Mammary epithelial cell (primary cell): ENCODE measurements at regions of chr2 and their contacts with region 1.

Region 1: GRCh38 chr2:27409321-27410073 is at the start of gene PPM1G:
- DNase-seq: peak; percentile 94
- H3K4me3 ChIP-seq: peak within 1 kb of the TSS; percentile 93 to 100 (median 96)
- H3K27ac ChIP-seq: peak within 1 kb of the TSS; percentile 82
- H3K4me1 ChIP-seq: peaks cover 11% of the 10 kb centered on the region
- H3K27me3 ChIP-seq: no peaks in the 10 kb centered on the region
- CTCF ChIP-seq: no peak
- total RNA-seq, gene PPM1G: 58.8 to 113 TPM

Region 2: GRCh38 chr2:27370026-27370815 is 39.3 kb before region 1 on chr2 and contains the starts of genes EIF2B4 and SNX17:
- CTCF ChIA-PET with region 1: no interaction called
- dilution Hi-C with region 1: no loop called
- in situ Hi-C with region 1: no loop called
- intact Hi-C with region 1: loop called (anchors 1 kb)
- DNase-seq: peak; percentile 99
- H3K4me3 ChIP-seq: peak within 1 kb of the TSS; percentile 88 to 96 (median 94)
- H3K27ac ChIP-seq: peak within 1 kb of the TSS; percentile 67
- H3K4me1 ChIP-seq: peaks cover 18% of the 10 kb centered on the region
- H3K27me3 ChIP-seq: no peaks in the 10 kb centered on the region
- CTCF ChIP-seq: peak; percentile 55 to 97
- total RNA-seq, gene EIF2B4: 19.8 to 42.3 TPM
- total RNA-seq, gene SNX17: 86.0 to 87.5 TPM

Region 3: DNA sequence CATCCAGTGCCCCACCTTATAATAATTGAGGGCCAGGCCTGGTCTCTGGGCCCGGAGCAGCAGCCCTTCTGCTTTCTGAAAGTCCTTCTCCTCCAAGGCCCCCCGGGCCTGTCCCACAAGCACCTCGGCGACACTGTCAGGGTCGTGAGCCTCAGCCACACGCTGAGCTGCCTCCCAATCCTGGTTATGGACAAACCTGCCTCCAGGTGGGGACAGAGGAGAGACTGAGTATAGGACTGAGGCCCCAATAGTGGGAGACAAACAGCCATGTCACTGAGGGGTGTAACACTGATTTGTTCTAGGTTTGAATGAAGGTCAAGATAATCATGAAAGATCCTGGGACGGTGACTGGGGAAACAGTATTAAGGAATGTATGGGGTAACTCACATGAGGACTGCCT is 44.5 kb after region 1 on chr2:
- CTCF ChIA-PET with region 1: interaction called, 13 read pairs
- dilution Hi-C with region 1: no loop called
- in situ Hi-C with region 1: no loop called
- intact Hi-C with region 1: no loop called
- DNase-seq: no peak
- H3K4me3 ChIP-seq: no peak overlapping the region
- H3K27ac ChIP-seq: no peak overlapping the region
- H3K4me1 ChIP-seq: no peaks in the 10 kb centered on the region
- H3K27me3 ChIP-seq: no peaks in the 10 kb centered on the region
- CTCF ChIP-seq: no peak

Region 4: DNA sequence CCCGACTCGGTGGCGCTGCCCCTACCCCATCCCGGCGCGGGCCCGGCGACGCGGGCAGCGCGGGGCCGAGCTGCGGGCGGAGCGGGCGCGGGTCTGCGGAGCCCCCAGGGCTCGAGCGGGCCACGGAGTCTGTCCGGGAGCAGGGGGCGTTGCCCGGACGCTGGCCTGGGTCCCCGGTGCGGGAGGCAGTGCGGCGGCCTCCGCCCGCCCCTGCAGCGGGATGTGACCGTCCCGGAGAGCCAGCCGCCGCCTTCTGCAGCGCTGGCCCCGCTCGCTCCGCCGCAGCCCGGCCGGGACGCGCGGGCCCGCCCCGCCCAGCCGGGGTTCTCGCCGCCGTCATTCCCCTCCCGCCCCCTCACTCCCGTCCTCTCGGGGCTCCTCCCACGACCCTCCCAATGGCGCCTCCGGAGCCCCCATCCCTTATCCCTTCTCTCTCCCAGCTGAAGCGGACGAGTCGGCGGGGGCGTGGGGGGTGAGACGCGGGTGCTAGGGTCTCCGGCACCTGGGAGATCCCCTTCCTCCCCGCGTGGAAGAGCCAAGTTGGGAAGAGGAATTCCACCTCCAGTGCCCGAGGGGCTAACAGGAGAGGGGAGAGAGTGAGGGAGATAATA is 85.6 kb after region 1 on chr2 and contains the start of gene FNDC4:
- CTCF ChIA-PET with region 1: no interaction called
- dilution Hi-C with region 1: no loop called
- in situ Hi-C with region 1: no loop called
- intact Hi-C with region 1: no loop called
- DNase-seq: no peak
- H3K4me3 ChIP-seq: peak within 1 kb of the TSS; percentile 55 to 67 (median 63)
- H3K27ac ChIP-seq: peak within 1 kb of the TSS; percentile 35
- H3K4me1 ChIP-seq: peaks cover 36% of the 10 kb centered on the region
- H3K27me3 ChIP-seq: no peaks in the 10 kb centered on the region
- CTCF ChIP-seq: no peak
- total RNA-seq, gene FNDC4: 21.7 to 29.2 TPM

Region 5: DNA sequence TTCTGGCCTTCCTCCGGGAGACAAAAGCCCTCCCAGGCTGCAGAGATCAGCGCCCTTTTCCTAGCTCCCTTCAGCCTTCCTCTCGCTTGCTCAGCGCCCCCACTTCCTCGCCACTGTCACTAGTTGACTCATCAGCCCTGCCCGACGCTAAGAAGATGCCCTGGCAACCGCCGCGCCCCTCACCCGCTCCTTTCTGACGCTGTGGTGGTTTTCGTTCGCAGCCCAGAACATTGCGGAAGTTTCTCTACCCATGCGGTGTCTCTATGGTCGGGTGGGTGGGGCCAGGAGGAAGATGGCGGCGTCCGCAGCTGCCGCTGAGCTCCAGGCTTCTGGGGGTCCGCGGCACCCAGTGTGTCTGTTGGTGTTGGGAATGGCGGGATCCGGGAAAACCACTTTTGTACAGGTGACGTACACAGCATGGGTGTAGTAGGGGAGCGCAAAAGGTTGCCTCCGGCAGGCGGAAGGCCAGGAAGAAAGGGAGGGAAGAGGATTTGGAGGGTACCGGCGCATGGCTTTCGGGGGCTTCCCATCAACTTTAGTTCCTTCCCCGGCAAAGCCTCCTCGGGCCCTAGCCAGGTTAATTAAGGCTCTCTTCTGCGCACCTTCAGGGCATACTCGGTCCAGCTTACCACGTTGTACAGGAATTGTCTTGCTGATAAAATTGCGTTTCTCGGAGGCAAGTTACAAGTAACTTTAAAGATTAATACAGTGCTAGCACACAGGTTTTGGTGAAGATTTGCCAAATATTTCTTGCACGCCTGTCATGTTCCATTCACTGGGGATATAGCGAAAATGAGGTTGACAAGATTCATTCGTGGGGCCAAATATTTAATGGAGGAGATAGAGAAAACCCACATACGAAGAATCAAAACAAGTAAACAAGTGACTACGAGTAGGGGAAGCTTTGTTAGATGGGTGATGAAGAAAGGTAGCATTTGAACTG is 219.5 kb after region 1 on chr2 and contains the starts of genes CCDC121 and GPN1:
- CTCF ChIA-PET with region 1: no interaction called
- dilution Hi-C with region 1: no loop called
- in situ Hi-C with region 1: loop called in 1 of 2 experiments (anchors 25 kb)
- intact Hi-C with region 1: loop called (anchors 1 kb)
- DNase-seq: peak; percentile 93
- H3K4me3 ChIP-seq: peak within 1 kb of the TSS; percentile 56 to 90 (median 70)
- H3K27ac ChIP-seq: peak within 1 kb of the TSS; percentile 90
- H3K4me1 ChIP-seq: peaks cover 23% of the 10 kb centered on the region
- H3K27me3 ChIP-seq: no peaks in the 10 kb centered on the region
- CTCF ChIP-seq: no peak
- total RNA-seq, gene CCDC121: 1.2 to 1.9 TPM
- total RNA-seq, gene GPN1: 42.9 to 46.8 TPM

Region 6: DNA sequence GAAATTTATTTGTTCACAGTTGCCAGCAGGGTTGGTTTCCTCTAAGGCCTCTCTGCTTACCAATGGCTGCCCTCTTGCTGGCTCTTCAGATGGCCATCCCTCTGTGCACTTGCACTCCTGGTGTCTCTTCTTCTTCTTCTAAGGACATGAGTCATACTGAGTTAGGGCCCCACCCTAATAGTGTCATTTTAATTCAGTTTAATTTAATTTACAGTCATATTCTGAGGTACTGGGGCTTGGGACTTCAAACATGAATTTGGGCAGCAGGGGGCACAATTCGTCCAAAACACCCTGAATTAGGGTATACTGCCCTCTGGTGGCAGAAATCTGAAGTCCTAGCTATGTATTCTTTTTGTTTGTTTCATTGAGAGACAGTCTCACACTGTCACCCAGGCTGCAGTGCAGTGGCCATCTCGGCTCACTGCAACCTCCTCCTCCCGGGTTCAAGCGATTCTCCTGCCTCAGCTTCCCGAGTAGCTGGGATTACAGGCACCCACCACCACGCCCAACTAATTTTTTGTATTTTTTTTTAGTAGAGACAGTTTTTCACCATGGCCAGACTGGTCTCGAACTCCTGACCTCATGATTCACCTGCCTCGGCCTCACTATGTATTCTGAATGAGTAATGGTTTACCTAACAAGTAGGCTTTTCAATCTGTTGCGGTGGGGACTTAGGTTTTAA is 274.0 kb after region 1 on chr2:
- CTCF ChIA-PET with region 1: interaction called, 7 read pairs
- dilution Hi-C with region 1: no loop called
- in situ Hi-C with region 1: no loop called
- intact Hi-C with region 1: loop called (anchors 1 kb)
- DNase-seq: peak; percentile 84
- H3K4me3 ChIP-seq: no peak overlapping the region
- H3K27ac ChIP-seq: peak overlapping the region; percentile 73
- H3K4me1 ChIP-seq: peaks cover 47% of the 10 kb centered on the region
- H3K27me3 ChIP-seq: no peaks in the 10 kb centered on the region
- CTCF ChIP-seq: peak; percentile 93 to 95

Region 7: GRCh38 chr2:28944535-28945248 is 1535.2 kb after region 1 on chr2:
- CTCF ChIA-PET with region 1: no interaction called
- dilution Hi-C with region 1: no loop called
- in situ Hi-C with region 1: no loop called
- intact Hi-C with region 1: no loop called
- DNase-seq: no peak
- H3K4me3 ChIP-seq: no peak overlapping the region
- H3K27ac ChIP-seq: no peak overlapping the region
- H3K4me1 ChIP-seq: no peaks in the 10 kb centered on the region
- H3K27me3 ChIP-seq: no peaks in the 10 kb centered on the region
- CTCF ChIP-seq: no peak